ENCODE measurements at regions of chr11 and their contacts with region 1.

Region 1: GRCh38 chr11:100863080-100863581 is 176.0 kb downstream of the ARHGAP42 start:
- DNase-seq: no peak
- ATAC-seq: peak; percentile 77

Region 2: GRCh38 chr11:100918551-100919500 is 55.7 kb after region 1 on chr11:
- intact Hi-C with region 1: loop called (anchors 10 kb)
- DNase-seq: no peak
- ATAC-seq: peak; percentile 25